PC-3 (cell line): ENCODE measurements at regions of chr10 and their contacts with region 1.

Region 1: GRCh38 chr10:50552771-50553535 is 70.8 kb downstream of the SGMS1 start:
- DNase-seq: peak; percentile 66
- ATAC-seq: peak; percentile 83
- H3K4me3 ChIP-seq: no peak overlapping the region
- H3K27ac ChIP-seq: no peak overlapping the region
- H3K4me1 ChIP-seq: no peaks in the 10 kb centered on the region
- H3K27me3 ChIP-seq: no peaks in the 10 kb centered on the region
- CTCF ChIP-seq: peak; percentile 86

Region 2: GRCh38 chr10:50367732-50368131 is 185.2 kb before region 1 on chr10:
- CTCF ChIA-PET with region 1: interaction called, 9 read pairs
- POLR2A ChIA-PET with region 1: no interaction called
- intact Hi-C with region 1: loop called (anchors 10 kb)
- DNase-seq: peak; percentile 94
- ATAC-seq: peak; percentile 89
- H3K4me3 ChIP-seq: no peak overlapping the region
- H3K27ac ChIP-seq: no peak overlapping the region
- H3K4me1 ChIP-seq: peaks cover 12% of the 10 kb centered on the region
- H3K27me3 ChIP-seq: no peaks in the 10 kb centered on the region
- CTCF ChIP-seq: peak; percentile 98

Region 3: DNA sequence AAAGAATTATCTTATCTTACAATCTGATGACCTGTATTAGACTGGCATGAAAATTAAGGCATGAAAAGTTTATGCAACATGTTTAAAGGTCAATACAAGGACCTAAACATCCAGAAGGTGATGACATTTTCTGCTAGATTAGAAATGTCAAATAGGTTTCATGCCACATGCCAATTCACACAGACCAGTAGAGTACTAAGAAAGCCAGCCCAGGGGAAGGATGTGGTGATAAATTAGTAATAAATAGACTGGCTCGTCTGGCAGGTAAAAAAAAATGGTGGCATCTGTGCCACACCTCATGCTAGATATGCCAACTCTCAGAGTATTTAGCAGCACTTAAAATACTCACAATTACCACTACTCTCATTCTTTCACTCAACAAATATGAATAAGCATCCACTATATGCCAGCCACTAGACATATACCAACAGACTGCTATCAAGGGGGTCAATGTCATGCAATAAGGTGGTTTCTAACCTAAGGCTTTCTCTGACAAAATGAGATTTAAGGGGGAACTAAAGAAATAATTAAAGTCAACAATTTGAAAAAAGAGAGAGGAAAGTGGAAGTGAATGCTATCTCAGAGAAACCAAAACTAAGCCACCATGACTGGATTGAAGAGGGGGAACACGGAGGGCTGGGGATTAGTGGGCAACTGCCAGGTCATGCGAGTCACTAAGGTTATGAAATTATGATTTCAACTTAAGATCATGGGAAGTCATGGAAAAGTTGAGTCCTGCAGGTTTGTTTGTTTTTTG is 12.7 kb before region 1 on chr10:
- CTCF ChIA-PET with region 1: no interaction called
- POLR2A ChIA-PET with region 1: no interaction called
- intact Hi-C with region 1: no loop called
- DNase-seq: peak; percentile 38
- ATAC-seq: no peak
- H3K4me3 ChIP-seq: no peak overlapping the region
- H3K27ac ChIP-seq: no peak overlapping the region
- H3K4me1 ChIP-seq: no peaks in the 10 kb centered on the region
- H3K27me3 ChIP-seq: no peaks in the 10 kb centered on the region
- CTCF ChIP-seq: no peak

Region 4: GRCh38 chr10:51129946-51130544 is 577.1 kb after region 1 on chr10:
- CTCF ChIA-PET with region 1: no interaction called
- POLR2A ChIA-PET with region 1: no interaction called
- intact Hi-C with region 1: no loop called
- DNase-seq: peak; percentile 96
- ATAC-seq: peak; percentile 87
- H3K4me3 ChIP-seq: peak overlapping the region; percentile 21
- H3K27ac ChIP-seq: peak overlapping the region; percentile 63
- H3K4me1 ChIP-seq: peaks cover 16% of the 10 kb centered on the region
- H3K27me3 ChIP-seq: no peaks in the 10 kb centered on the region
- CTCF ChIP-seq: no peak